ENCODE measurements at regions of chr15 and their contacts with region 1.

Region 1: DNA sequence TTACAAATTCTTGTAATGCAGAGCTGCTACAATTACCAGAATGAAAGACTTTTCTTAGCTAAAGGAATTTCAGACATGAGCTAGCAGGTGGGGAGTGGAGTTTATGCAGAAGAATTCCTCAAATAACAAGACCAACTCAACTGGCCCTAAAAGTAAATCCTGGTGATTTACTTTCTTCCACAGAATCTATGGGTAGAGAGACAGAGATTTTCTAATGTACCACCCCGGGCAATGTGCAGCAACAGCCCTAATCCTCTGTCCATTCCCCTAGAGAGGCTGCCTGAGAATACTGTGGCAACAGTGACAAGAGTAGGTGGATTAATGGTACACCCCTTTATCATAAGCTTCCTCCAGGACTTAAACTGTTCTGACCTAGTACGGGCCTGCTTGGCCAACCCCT is 55.2 kb downstream of the AQR start:
- DNase-seq: no peak
- ATAC-seq: no peak

Region 2: DNA sequence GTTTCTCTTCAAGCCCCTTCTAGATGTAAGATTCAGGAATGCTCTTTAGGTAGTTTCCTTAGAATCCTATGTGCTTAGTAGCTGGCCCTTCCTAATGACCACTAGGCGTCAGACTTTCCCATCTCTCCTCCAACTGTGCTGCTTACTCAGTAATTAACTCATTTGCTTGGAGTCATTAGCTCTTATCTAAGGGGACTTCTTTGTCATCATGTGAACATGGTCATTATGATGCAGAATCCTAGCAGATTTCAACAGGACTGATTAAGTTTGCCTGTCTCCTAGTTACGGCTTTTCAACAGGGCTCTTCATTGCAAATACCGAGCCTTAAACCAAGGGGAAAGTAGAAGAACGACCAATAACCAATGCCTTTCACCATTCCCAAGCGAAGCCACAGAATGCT is 205.9 kb before region 1 on chr15:
- intact Hi-C with region 1: loop called (anchors 10 kb)
- DNase-seq: no peak
- ATAC-seq: peak; percentile 57

Measured in sciatic nerve (tissue), 2 donors.